Activated CD4-positive, alpha-beta T cell treated with anti-CD3 and anti-CD28 coated beads for 36 hours (primary cell): ENCODE measurements at regions of chr19 and their contacts with region 1.

Region 1: GRCh38 chr19:40285353-40286234 is 449 bp upstream of the AKT2 start:
- DNase-seq: peak; percentile 98
- ATAC-seq: peak; percentile 89
- H3K4me3 Mint-ChIP-seq: peak overlapping the region; percentile 95
- H3K27ac Mint-ChIP-seq: peak overlapping the region; percentile 99
- H3K4me1 Mint-ChIP-seq: peaks cover 42% of the 10 kb centered on the region
- H3K27me3 Mint-ChIP-seq: no peaks in the 10 kb centered on the region

Region 2: GRCh38 chr19:39390755-39391592 is 894.6 kb before region 1 on chr19 and contains the starts of genes MED29 and PAF1:
- CTCF ChIA-PET with region 1: no interaction called
- POLR2A ChIA-PET with region 1: no interaction called
- intact Hi-C with region 1: loop called in 1 of 2 experiments (anchors 5 kb)
- DNase-seq: peak; percentile 98
- ATAC-seq: peak; percentile 97
- H3K4me3 Mint-ChIP-seq: peak within 1 kb of the TSS; percentile 99
- H3K27ac Mint-ChIP-seq: peak within 1 kb of the TSS; percentile 98
- H3K4me1 Mint-ChIP-seq: peaks cover 28% of the 10 kb centered on the region
- H3K27me3 Mint-ChIP-seq: no peaks in the 10 kb centered on the region
- total RNA-seq, gene MED29: 24.0 to 34.6 TPM
- total RNA-seq, gene PAF1: 40.4 to 54.2 TPM

Region 3: DNA sequence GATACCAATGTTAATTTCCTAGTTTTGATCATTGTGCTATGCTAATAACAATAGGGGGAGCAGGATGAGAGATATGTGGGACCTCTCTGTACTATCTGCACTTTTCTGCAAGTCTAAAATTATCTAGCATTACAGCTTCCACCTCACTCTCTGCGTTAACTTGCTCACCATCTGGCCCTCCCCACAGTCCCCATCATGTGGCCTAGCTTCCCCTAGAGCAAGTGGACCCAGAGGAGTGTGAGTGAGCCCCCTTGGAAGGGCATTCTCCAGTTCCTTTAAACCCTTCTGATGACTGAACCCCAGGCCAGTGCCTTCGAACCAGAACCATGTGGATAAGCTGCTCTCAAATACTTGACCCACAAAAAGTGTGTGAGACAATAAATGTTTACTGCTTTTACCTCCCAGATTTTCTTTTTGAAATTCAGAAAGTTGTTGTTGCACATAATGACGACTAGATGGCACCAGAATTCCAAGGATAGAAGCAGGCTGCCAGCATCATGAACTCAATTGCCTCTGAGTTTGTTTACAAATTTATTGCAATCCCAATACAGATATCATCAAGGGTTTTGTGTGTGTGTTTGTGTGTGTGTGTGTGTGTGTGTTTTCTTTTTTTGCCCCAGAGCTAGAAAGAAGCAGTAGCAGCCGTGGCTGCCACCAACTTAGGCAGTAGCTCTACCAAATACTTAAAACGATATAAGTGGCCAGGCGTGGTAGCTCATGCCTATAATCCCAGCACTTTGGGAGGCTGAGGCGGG is 145.9 kb before region 1 on chr19:
- CTCF ChIA-PET with region 1: interaction called, 3 read pairs
- POLR2A ChIA-PET with region 1: no interaction called
- intact Hi-C with region 1: loop called in 1 of 2 experiments (anchors 1 kb)
- DNase-seq: no peak
- ATAC-seq: no peak
- H3K4me3 Mint-ChIP-seq: no peak overlapping the region
- H3K27ac Mint-ChIP-seq: no peak overlapping the region
- H3K4me1 Mint-ChIP-seq: peaks cover 13% of the 10 kb centered on the region
- H3K27me3 Mint-ChIP-seq: no peaks in the 10 kb centered on the region

Region 4: GRCh38 chr19:40257057-40257517 is 28.5 kb before region 1 on chr19:
- CTCF ChIA-PET with region 1: no interaction called
- POLR2A ChIA-PET with region 1: no interaction called
- intact Hi-C with region 1: no loop called
- DNase-seq: no peak
- ATAC-seq: no peak
- H3K4me3 Mint-ChIP-seq: no peak overlapping the region
- H3K27ac Mint-ChIP-seq: peak overlapping the region; percentile 58
- H3K4me1 Mint-ChIP-seq: peaks cover 15% of the 10 kb centered on the region
- H3K27me3 Mint-ChIP-seq: no peaks in the 10 kb centered on the region

Region 5: DNA sequence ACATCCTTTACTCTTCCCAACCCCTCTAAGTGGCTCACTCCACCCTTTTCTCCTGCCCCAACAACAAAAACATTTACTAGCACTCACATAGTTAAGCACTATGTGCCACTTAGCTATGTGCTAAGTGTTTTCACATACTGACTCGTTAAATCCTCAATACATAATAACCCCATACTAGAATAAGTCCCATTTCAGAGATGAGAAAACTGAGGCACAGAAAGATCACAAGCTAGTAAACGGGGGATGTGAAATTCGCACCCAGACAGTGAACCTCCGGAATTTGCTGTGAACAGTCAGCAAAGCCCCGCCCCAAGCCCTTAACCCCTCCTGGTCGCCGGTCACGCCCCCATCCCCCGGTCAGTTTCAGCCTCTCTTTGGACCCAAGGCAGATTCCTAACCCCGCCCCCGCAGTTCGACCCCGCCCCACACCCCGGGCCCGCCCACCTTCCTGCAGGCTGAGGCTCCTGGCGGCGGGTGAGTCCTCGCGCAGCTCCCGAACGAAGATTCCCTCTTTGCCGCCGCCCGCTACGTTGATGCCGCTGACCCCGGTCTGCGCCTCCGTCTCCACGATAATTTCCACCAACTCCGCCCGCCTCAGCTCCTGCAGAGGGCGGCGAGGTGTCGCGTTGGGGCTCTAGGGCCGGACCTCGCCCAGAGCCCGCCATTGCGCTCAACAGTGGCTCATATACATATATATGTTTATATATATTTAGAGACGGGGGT is 117.8 kb after region 1 on chr19:
- CTCF ChIA-PET with region 1: no interaction called
- POLR2A ChIA-PET with region 1: no interaction called
- intact Hi-C with region 1: loop called in 1 of 2 experiments (anchors 1 kb)
- DNase-seq: peak; percentile 94
- ATAC-seq: peak; percentile 67
- H3K4me3 Mint-ChIP-seq: peak overlapping the region; percentile 77
- H3K27ac Mint-ChIP-seq: peak overlapping the region; percentile 0
- H3K4me1 Mint-ChIP-seq: peaks cover 19% of the 10 kb centered on the region
- H3K27me3 Mint-ChIP-seq: no peaks in the 10 kb centered on the region

Region 6: GRCh38 chr19:40529093-40529954 is 243.7 kb after region 1 on chr19:
- CTCF ChIA-PET with region 1: no interaction called
- POLR2A ChIA-PET with region 1: no interaction called
- intact Hi-C with region 1: loop called in 1 of 2 experiments (anchors 1 kb)
- DNase-seq: peak; percentile 95
- ATAC-seq: peak; percentile 75
- H3K4me3 Mint-ChIP-seq: peak overlapping the region; percentile 47
- H3K27ac Mint-ChIP-seq: no peak overlapping the region
- H3K4me1 Mint-ChIP-seq: peaks cover 11% of the 10 kb centered on the region
- H3K27me3 Mint-ChIP-seq: peaks cover 19% of the 10 kb centered on the region

Region 7: GRCh38 chr19:40614622-40615411 is 329.2 kb after region 1 on chr19:
- CTCF ChIA-PET with region 1: no interaction called
- POLR2A ChIA-PET with region 1: no interaction called
- intact Hi-C with region 1: loop called in 1 of 2 experiments (anchors 1 kb)
- DNase-seq: peak; percentile 98
- ATAC-seq: peak; percentile 55
- H3K4me3 Mint-ChIP-seq: peak overlapping the region; percentile 99
- H3K27ac Mint-ChIP-seq: peak overlapping the region; percentile 100
- H3K4me1 Mint-ChIP-seq: peaks cover 58% of the 10 kb centered on the region
- H3K27me3 Mint-ChIP-seq: no peaks in the 10 kb centered on the region

Region 8: DNA sequence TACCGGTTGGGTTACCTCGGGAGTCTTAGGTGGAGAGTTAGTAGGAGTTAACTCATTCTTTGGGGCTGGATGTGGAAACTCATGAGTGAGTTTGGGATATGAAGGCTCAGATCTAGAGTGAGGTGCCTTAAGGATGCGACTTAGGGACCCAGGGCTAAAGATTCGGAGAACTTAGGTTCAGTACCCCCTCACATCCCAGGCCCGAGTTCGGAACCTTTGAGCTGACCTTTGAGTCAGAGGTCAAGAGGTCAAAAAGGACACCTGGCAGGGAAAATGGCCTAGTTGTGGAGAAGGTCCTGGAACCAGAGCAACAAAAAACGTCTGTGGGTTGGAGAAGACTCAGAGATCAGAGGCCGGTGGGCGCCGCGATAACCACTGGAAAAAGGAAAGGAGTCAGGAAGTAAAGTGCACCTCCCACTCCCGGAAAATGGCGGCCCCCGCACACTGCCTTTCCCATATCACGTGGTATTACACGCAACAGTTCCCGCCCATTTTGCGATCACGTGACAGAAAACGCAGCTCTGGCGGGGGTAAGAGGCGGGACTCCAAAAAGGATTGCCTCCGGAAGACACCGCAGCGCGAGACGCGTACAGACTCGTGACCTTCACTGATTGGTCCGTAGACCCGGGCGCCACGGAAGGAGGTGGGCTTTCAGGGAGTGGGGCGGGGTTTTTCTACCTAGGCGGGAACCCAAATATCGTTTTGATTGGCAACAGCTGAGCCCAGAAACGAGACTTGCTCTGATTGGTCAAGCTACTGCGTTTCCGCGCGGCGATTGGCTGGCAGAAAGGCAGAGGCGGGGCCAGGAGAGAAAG is 464.7 kb after region 1 on chr19 and contains the start of gene ACTMAP:
- CTCF ChIA-PET with region 1: no interaction called
- POLR2A ChIA-PET with region 1: no interaction called
- intact Hi-C with region 1: loop called in 1 of 2 experiments (anchors 1 kb)
- DNase-seq: peak; percentile 100
- ATAC-seq: peak; percentile 90
- H3K4me3 Mint-ChIP-seq: peak within 1 kb of the TSS; percentile 81
- H3K27ac Mint-ChIP-seq: peak within 1 kb of the TSS; percentile 99
- H3K4me1 Mint-ChIP-seq: peaks cover 34% of the 10 kb centered on the region
- H3K27me3 Mint-ChIP-seq: no peaks in the 10 kb centered on the region
- total RNA-seq, gene ACTMAP: 15.0 to 18.0 TPM